CD4-positive, alpha-beta memory T cell (primary cell): ENCODE measurements at regions of chr4 and their contacts with region 1.

Region 1: DNA sequence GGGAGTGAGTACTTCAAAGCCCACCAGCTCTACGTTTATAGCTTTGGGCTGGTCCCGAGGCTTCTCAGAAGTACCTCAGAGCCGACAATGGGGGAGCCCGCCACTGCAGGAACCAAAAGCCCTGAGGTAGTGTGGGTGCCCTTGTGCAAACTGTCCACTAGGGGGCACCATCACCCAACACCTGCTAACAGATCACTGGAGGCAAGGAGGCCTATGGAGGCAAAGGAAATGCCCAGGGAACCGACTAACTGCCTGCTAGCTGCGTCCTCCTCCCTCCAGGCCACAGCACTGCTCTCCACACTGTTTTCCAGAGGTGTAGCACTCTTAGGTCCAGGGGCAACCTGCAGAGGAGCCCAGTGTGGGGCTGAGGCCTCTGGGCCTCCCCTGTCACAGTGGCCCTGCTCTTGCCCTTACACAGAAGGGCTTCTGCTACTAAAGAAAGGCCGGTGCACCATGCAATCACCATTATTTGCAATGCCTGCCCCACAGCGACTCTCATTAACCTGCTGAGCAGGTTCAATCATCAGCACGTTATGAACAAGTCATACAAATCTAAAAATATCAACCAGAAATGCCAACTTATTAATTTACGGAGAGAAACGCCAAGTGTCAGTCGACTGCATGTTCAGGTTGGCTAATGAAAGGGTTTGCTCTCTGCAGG is 159.1 kb downstream of the NSUN7 start:
- DNase-seq: peak in 4 of 5 donors; percentile 49 to 56 (median 54)
- H3K4me3 ChIP-seq: no peak overlapping the region
- H3K4me3 Mint-ChIP-seq: peak overlapping the region in 1 of 8 donors; percentile 48
- H3K27ac ChIP-seq: no peak overlapping the region
- H3K27ac Mint-ChIP-seq: peak overlapping the region in 4 of 7 donors; percentile 2 to 53 (median 39)
- H3K4me1 ChIP-seq: peaks cover 11% of the 10 kb centered on the region
- H3K4me1 Mint-ChIP-seq: peaks cover 10 to 15% (median 12%) of the 10 kb centered on the region in 4 donors
- H3K27me3 ChIP-seq: no peaks in the 10 kb centered on the region
- H3K27me3 Mint-ChIP-seq: no peaks in the 10 kb centered on the region

Region 2: GRCh38 chr4:40924096-40924792 is 15.4 kb after region 1 on chr4:
- CTCF ChIA-PET with region 1: interaction called, 92 read pairs
- POLR2A ChIA-PET with region 1: no interaction called
- intact Hi-C with region 1: loop called (anchors 2 kb)
- DNase-seq: peak in 4 of 5 donors; percentile 32 to 47 (median 38)
- H3K4me3 ChIP-seq: no peak overlapping the region
- H3K4me3 Mint-ChIP-seq: no peak overlapping the region
- H3K27ac ChIP-seq: no peak overlapping the region
- H3K27ac Mint-ChIP-seq: peak overlapping the region in 1 of 7 donors; percentile 42
- H3K4me1 ChIP-seq: no peaks in the 10 kb centered on the region
- H3K4me1 Mint-ChIP-seq: peaks cover 0 to 6% (median 2%) of the 10 kb centered on the region in 4 donors
- H3K27me3 ChIP-seq: no peaks in the 10 kb centered on the region
- H3K27me3 Mint-ChIP-seq: peaks cover 14 to 17% of the 10 kb centered on the region in 2 donors